Common myeloid progenitor, CD34-positive (primary cell): ENCODE measurements at regions of chr2 and their contacts with region 1.

Region 1: GRCh38 chr2:64586883-64587481 is 62.9 kb downstream of the AFTPH start:
- DNase-seq: peak; percentile 65 to 81 (median 75)
- H3K4me3 ChIP-seq: no peak overlapping the region
- H3K27ac ChIP-seq: no peak overlapping the region
- H3K4me1 ChIP-seq: peaks cover 0 to 10% (median 0%) of the 10 kb centered on the region in 4 experiments
- H3K27me3 ChIP-seq: no peaks in the 10 kb centered on the region

Region 2: GRCh38 chr2:64617631-64618151 is 30.7 kb after region 1 on chr2:
- CTCF ChIA-PET with region 1: interaction called, 14 read pairs
- POLR2A ChIA-PET with region 1: no interaction called
- DNase-seq: peak in 2 of 3 donors; percentile 54 to 59
- H3K4me3 ChIP-seq: no peak overlapping the region
- H3K27ac ChIP-seq: no peak overlapping the region
- H3K4me1 ChIP-seq: peaks cover 5 to 31% (median 16%) of the 10 kb centered on the region in 4 experiments
- H3K27me3 ChIP-seq: no peaks in the 10 kb centered on the region

Region 3: DNA sequence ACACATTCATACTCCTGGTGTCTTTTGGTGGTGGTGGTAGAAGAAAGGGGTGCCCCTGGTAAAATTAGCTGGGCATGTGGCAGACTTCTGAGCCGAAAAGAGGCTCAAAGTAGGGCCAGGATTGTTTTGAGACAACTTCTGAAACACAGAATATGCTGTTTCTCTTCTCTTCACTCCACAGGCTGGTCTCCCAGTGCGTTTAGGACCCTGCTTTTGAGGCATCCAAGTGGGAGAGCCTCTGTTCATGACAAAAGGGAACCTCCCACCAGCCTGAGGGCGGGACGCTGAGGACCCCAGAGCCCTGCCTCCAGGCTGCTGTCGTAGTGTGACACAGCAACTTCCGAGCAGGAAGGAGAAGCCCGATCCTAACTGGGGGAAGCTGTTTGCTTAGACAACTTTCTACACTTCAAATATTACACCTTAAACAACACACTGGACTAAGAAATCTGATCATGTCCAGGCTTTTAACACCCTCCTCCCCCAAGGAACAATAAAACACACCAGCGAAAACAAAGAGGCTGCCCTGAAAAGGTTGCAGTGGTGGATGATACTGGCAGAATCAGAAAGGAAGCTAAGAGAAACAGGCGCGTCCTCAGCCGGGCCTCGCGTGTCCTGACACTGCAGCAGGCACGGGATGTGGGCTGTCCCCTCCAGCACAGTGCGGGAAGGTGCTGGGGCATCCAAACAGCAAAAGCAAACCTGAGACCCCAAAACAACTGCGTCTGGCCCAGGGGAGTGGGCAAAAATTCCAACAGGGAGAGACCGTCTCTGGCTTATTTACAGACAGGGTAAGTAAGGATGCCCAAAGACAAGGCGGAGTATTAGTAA is 57.4 kb after region 1 on chr2:
- CTCF ChIA-PET with region 1: interaction called, 13 read pairs
- POLR2A ChIA-PET with region 1: interaction called, 3 read pairs
- DNase-seq: peak; percentile 89 to 95 (median 94)
- H3K4me3 ChIP-seq: peak overlapping the region; percentile 17 to 80 (median 70)
- H3K27ac ChIP-seq: peak overlapping the region; percentile 96 to 98
- H3K4me1 ChIP-seq: peaks cover 38 to 96% (median 80%) of the 10 kb centered on the region in 4 experiments
- H3K27me3 ChIP-seq: no peaks in the 10 kb centered on the region

Region 4: GRCh38 chr2:64865073-64865830 is 278.3 kb after region 1 on chr2:
- CTCF ChIA-PET with region 1: interaction called, 29 read pairs
- POLR2A ChIA-PET with region 1: no interaction called
- DNase-seq: peak; percentile 61 to 84 (median 82)
- H3K4me3 ChIP-seq: peak overlapping the region; percentile 42 to 83 (median 75)
- H3K27ac ChIP-seq: peak overlapping the region in 1 of 2 experiments; percentile 65
- H3K4me1 ChIP-seq: peaks cover 10 to 52% (median 23%) of the 10 kb centered on the region in 4 experiments
- H3K27me3 ChIP-seq: no peaks in the 10 kb centered on the region